CD4-positive, alpha-beta T cell (primary cell): ENCODE measurements at regions of chr6 and their contacts with region 1.

Region 1: GRCh38 chr6:33454009-33454946 is at the start of gene ZBTB9:
- DNase-seq: peak; percentile 82 to 97 (median 92)
- ATAC-seq: peak; percentile 98
- H3K4me3 ChIP-seq: peak within 1 kb of the TSS; percentile 89
- H3K4me3 Mint-ChIP-seq: peak within 1 kb of the TSS; percentile 92
- H3K27ac ChIP-seq: peak within 1 kb of the TSS; percentile 55 to 60
- H3K27ac Mint-ChIP-seq: peak within 1 kb of the TSS; percentile 87
- H3K4me1 ChIP-seq: peaks cover 33% of the 10 kb centered on the region
- H3K4me1 Mint-ChIP-seq: peaks cover 41% of the 10 kb centered on the region
- H3K27me3 ChIP-seq: no peaks in the 10 kb centered on the region
- H3K27me3 Mint-ChIP-seq: no peaks in the 10 kb centered on the region
- CTCF ChIP-seq: no peak
- total RNA-seq, gene ZBTB9: 5.5 to 5.7 TPM

Region 2: GRCh38 chr6:33410050-33410710 is 44.1 kb before region 1 on chr6:
- CTCF ChIA-PET with region 1: no interaction called
- POLR2A ChIA-PET with region 1: interaction called, 11 read pairs
- intact Hi-C with region 1: loop called in 1 of 2 experiments (anchors 1 kb)
- DNase-seq: peak; percentile 92 to 99 (median 98)
- ATAC-seq: peak; percentile 71
- H3K4me3 ChIP-seq: peak overlapping the region; percentile 81
- H3K4me3 Mint-ChIP-seq: peak overlapping the region; percentile 95
- H3K27ac ChIP-seq: peak overlapping the region; percentile 95 to 99
- H3K27ac Mint-ChIP-seq: peak overlapping the region; percentile 98
- H3K4me1 ChIP-seq: peaks cover 64% of the 10 kb centered on the region
- H3K4me1 Mint-ChIP-seq: peaks cover 57% of the 10 kb centered on the region
- H3K27me3 ChIP-seq: no peaks in the 10 kb centered on the region
- H3K27me3 Mint-ChIP-seq: no peaks in the 10 kb centered on the region
- CTCF ChIP-seq: no peak

Region 3: GRCh38 chr6:33425668-33426577 is 28.4 kb before region 1 on chr6:
- CTCF ChIA-PET with region 1: no interaction called
- POLR2A ChIA-PET with region 1: interaction called, 45 read pairs
- intact Hi-C with region 1: loop called in 1 of 2 experiments (anchors 2 kb)
- DNase-seq: peak; percentile 65 to 91 (median 80)
- ATAC-seq: peak; percentile 48
- H3K4me3 ChIP-seq: peak overlapping the region; percentile 71
- H3K4me3 Mint-ChIP-seq: peak overlapping the region; percentile 94
- H3K27ac ChIP-seq: peak overlapping the region; percentile 86 to 92
- H3K27ac Mint-ChIP-seq: peak overlapping the region; percentile 99
- H3K4me1 ChIP-seq: peaks cover 60% of the 10 kb centered on the region
- H3K4me1 Mint-ChIP-seq: peaks cover 80% of the 10 kb centered on the region
- H3K27me3 ChIP-seq: no peaks in the 10 kb centered on the region
- H3K27me3 Mint-ChIP-seq: no peaks in the 10 kb centered on the region
- CTCF ChIP-seq: peak; percentile 65

Region 4: DNA sequence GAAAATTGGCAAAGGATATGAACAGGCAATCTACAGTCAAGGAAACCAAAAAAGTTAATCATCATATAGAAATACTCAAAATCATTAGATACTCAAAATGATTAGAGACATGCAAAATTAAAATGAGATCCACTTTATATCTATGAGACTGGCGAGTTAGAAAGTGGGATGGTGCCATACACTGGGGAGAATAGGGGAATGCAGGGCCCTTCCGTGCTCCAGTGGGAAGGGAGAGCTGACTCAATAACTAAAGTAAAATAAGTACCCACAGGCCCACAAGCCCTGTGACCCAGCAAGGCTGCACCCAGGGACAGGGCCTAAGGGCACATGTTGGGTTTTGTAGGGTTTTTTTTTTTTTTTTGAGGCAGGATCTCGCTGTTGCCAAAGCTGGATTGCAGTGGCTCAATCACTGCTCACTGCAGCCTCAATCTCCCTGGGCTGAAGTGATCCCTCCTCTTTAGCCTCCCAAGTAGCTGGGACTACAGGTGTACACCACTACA is 80.9 kb after region 1 on chr6:
- CTCF ChIA-PET with region 1: no interaction called
- POLR2A ChIA-PET with region 1: interaction called, 6 read pairs
- intact Hi-C with region 1: loop called in 1 of 2 experiments (anchors 5 kb)
- DNase-seq: no peak
- ATAC-seq: no peak
- H3K4me3 ChIP-seq: no peak overlapping the region
- H3K4me3 Mint-ChIP-seq: no peak overlapping the region
- H3K27ac ChIP-seq: no peak overlapping the region
- H3K27ac Mint-ChIP-seq: peak overlapping the region; percentile 18
- H3K4me1 ChIP-seq: peaks cover 17% of the 10 kb centered on the region
- H3K4me1 Mint-ChIP-seq: peaks cover 18% of the 10 kb centered on the region
- H3K27me3 ChIP-seq: no peaks in the 10 kb centered on the region
- H3K27me3 Mint-ChIP-seq: no peaks in the 10 kb centered on the region
- CTCF ChIP-seq: no peak

Region 5: GRCh38 chr6:33633462-33634158 is 179.3 kb after region 1 on chr6:
- CTCF ChIA-PET with region 1: no interaction called
- POLR2A ChIA-PET with region 1: no interaction called
- intact Hi-C with region 1: loop called in 1 of 2 experiments (anchors 5 kb)
- DNase-seq: peak in 13 of 14 experiments; percentile 17 to 85 (median 49)
- ATAC-seq: peak; percentile 63
- H3K4me3 ChIP-seq: peak overlapping the region; percentile 55
- H3K4me3 Mint-ChIP-seq: peak overlapping the region; percentile 93
- H3K27ac ChIP-seq: no peak overlapping the region
- H3K27ac Mint-ChIP-seq: peak overlapping the region; percentile 68
- H3K4me1 ChIP-seq: peaks cover 56% of the 10 kb centered on the region
- H3K4me1 Mint-ChIP-seq: peaks cover 71% of the 10 kb centered on the region
- H3K27me3 ChIP-seq: no peaks in the 10 kb centered on the region
- H3K27me3 Mint-ChIP-seq: no peaks in the 10 kb centered on the region
- CTCF ChIP-seq: no peak

Region 6: DNA sequence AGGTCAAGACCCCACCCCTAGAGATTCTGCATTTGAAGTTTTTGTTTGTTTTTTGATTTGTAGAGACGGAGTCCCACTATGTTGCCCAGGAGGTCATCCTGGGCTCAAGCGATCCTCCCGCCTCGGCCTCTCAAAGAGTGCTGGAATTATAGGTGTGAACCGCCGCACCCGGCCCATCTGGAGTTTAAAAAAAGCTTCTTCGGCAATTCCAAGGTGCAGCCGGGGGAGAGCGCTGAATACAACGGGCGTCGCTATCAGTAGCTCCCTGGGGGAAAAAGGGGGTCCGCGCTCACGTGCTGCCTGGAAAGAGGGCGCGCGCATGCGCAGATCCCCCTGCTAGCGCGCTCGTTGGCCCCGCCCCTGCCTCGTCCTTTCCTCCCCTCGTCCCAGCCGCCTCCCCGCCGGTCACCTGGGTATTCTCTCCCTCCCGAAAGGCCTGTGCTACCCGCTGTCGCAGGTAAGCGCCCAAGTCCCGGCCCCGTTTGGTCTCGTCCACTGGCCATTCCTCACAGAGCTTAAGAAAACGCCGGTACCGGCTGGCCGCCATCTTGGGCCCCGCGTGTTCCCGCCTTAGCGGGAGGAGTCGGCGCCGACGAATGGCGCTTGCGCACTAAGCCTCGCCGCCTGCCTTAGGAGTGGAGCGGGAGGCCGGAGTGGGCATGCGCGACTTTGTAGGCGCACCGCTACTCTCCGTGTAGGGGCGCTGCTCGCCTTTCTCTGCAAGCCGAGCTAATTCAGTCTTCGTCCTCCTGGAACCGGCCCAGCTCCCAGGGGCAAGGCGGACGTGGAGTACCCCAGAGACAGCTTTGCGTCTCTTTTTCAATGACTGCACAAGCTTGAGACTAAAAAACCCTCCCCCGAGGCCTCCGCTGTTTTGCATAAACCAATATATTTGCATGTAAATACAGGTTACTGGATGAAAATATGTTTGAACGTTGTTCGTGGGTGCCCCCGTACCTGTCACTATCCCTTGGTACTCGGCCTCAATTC is 257.2 kb after region 1 on chr6 and contains the start of gene UQCC2:
- CTCF ChIA-PET with region 1: no interaction called
- POLR2A ChIA-PET with region 1: no interaction called
- intact Hi-C with region 1: loop called in 1 of 2 experiments (anchors 5 kb)
- DNase-seq: peak; percentile 93 to 99 (median 97)
- ATAC-seq: peak; percentile 97
- H3K4me3 ChIP-seq: peak within 1 kb of the TSS; percentile 72
- H3K4me3 Mint-ChIP-seq: peak within 1 kb of the TSS; percentile 100
- H3K27ac ChIP-seq: peak within 1 kb of the TSS; percentile 84 to 90
- H3K27ac Mint-ChIP-seq: peak within 1 kb of the TSS; percentile 97
- H3K4me1 ChIP-seq: peaks cover 27% of the 10 kb centered on the region
- H3K4me1 Mint-ChIP-seq: peaks cover 31% of the 10 kb centered on the region
- H3K27me3 ChIP-seq: no peaks in the 10 kb centered on the region
- H3K27me3 Mint-ChIP-seq: no peaks in the 10 kb centered on the region
- CTCF ChIP-seq: peak; percentile 80
- total RNA-seq, gene UQCC2: 8.7 to 9.3 TPM